Esophagus muscularis mucosa (tissue), 4 donors: ENCODE measurements at regions of chr1 and their contacts with region 1.

Region 1: GRCh38 chr1:116380499-116381242 is 7.6 kb downstream of the ATP1A1 start:
- DNase-seq: no peak
- H3K4me3 ChIP-seq: no peak overlapping the region
- H3K27ac ChIP-seq: peak overlapping the region in 3 of 4 donors; percentile 28 to 93 (median 93)
- H3K4me1 ChIP-seq: peaks cover 77 to 81% (median 81%) of the 10 kb centered on the region in 4 donors
- H3K27me3 ChIP-seq: no peaks in the 10 kb centered on the region
- CTCF ChIP-seq: no peak
- EP300 ChIP-seq: no peak
- POLR2A ChIP-seq: no peak

Region 2: GRCh38 chr1:115829023-115829693 is 551.5 kb before region 1 on chr1:
- intact Hi-C with region 1: no loop called
- DNase-seq: no peak
- H3K4me3 ChIP-seq: peak overlapping the region; percentile 57 to 69 (median 60)
- H3K27ac ChIP-seq: peak overlapping the region in 1 of 4 donors; percentile 60
- H3K4me1 ChIP-seq: peaks cover 15 to 20% (median 18%) of the 10 kb centered on the region in 4 donors
- H3K27me3 ChIP-seq: peaks cover 0 to 39% (median 2%) of the 10 kb centered on the region in 4 donors
- CTCF ChIP-seq: no peak
- EP300 ChIP-seq: no peak
- POLR2A ChIP-seq: no peak

Region 3: DNA sequence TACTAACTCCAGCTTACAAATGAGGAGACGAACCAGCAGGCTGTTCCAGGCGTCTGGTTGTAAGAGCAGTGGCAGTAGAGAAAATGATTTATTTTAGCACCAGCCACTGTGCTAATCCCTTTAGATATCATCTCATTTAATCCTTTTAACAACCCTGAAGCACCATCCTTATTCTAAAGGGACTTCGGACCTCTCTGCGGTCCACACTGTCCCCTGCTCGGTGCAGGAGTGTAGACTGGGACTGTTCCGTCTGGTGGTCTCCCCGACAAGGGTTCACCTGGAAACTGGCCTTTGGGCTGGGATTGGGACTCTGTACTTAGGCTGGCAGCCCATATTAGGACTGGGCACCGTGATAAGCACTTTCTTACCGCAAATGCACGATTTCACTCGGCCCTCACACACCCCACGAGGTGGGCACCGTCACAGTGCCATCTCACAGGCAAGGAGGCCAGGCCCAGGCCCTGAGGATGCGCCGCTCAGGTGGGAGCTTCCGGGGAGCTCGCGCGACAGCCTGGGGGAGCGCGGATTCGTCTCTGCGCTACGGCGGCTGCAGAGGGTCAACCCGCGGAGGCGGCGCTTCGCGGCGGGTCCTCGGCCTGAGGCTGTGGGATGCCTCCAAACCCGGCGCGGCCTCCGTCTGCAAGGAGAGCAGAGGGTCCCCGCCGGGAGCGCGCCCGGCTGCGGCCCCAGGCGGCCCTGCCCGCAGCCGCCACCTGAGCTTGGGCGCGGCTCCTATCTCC is 37.6 kb after region 1 on chr1:
- intact Hi-C with region 1: loop called (anchors 5 kb)
- DNase-seq: no peak
- H3K4me3 ChIP-seq: peak overlapping the region; percentile 74 to 90 (median 86)
- H3K27ac ChIP-seq: peak overlapping the region; percentile 75 to 83 (median 79)
- H3K4me1 ChIP-seq: peaks cover 13 to 30% (median 23%) of the 10 kb centered on the region in 4 donors
- H3K27me3 ChIP-seq: no peaks in the 10 kb centered on the region
- CTCF ChIP-seq: peak in 1 of 3 experiments; percentile 24
- EP300 ChIP-seq: no peak
- POLR2A ChIP-seq: peak; percentile 38